ENCODE measurements at regions of chr1 and their contacts with region 1.

Region 1: GRCh38 chr1:37692078-37692833 is at the start of gene CDCA8:
- DNase-seq: peak; percentile 99
- ATAC-seq: peak; percentile 88
- H3K4me3 Mint-ChIP-seq: peak within 1 kb of the TSS; percentile 97
- H3K27ac Mint-ChIP-seq: peak within 1 kb of the TSS; percentile 92
- H3K4me1 Mint-ChIP-seq: peaks cover 32% of the 10 kb centered on the region
- H3K27me3 Mint-ChIP-seq: no peaks in the 10 kb centered on the region
- total RNA-seq, gene CDCA8: 61.2 to 61.7 TPM

Region 2: GRCh38 chr1:36463803-36464604 is 1228.3 kb before region 1 on chr1 and contains the start of gene MRPS15:
- CTCF ChIA-PET with region 1: no interaction called
- POLR2A ChIA-PET with region 1: no interaction called
- intact Hi-C with region 1: loop called in 1 of 2 experiments (anchors 1 kb)
- DNase-seq: peak; percentile 98
- ATAC-seq: peak; percentile 94
- H3K4me3 Mint-ChIP-seq: peak within 1 kb of the TSS; percentile 97
- H3K27ac Mint-ChIP-seq: peak within 1 kb of the TSS; percentile 97
- H3K4me1 Mint-ChIP-seq: peaks cover 31% of the 10 kb centered on the region
- H3K27me3 Mint-ChIP-seq: no peaks in the 10 kb centered on the region
- total RNA-seq, gene MRPS15: 123 to 169 TPM

Region 3: DNA sequence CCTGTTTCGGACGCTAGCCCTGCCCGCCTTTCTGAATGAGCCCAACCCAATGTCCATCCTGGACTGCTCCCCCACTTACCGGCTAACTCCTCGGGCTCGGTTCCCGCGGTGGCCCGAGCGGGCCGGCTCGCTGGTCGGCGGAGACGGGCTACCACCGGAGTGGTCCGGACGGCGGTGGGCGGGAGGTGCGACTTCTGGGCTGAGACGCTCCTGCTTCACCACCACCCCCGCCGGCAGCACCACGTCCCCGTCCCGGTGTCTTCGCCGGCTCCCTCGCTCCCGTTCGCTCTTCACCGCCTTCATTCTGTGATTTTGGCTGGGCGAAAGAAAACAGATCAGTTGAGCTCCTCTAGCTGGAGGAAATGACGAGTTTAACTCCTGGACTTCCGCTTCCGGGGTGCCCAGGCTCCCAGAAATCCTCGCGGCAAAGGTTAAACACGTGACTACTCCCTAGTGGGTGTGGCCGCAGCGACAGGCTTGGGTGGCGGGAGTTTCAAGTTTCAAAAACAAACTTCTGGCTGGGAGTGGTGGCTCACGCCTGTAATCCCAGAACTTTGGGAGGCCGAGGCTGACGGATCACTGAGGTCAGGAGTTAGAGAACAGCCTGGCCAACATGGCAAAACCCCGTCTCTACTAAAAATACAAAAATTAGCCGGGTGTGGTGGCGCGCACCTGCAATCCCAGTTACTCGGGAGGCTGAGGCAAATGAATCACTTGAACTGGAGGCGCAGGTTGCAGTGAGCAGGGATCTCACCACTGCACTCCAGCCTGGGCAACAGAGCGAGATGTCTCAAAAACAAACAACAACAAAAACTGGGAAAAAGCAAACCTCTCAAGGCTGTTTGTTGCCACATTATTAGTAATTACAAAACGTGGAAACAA is 138.1 kb before region 1 on chr1 and contains the start of gene SNIP1:
- CTCF ChIA-PET with region 1: interaction called, 3 read pairs
- POLR2A ChIA-PET with region 1: interaction called, 3 read pairs
- intact Hi-C with region 1: loop called in 1 of 2 experiments (anchors 1 kb)
- DNase-seq: peak; percentile 95
- ATAC-seq: peak; percentile 93
- H3K4me3 Mint-ChIP-seq: peak within 1 kb of the TSS; percentile 92
- H3K27ac Mint-ChIP-seq: peak within 1 kb of the TSS; percentile 95
- H3K4me1 Mint-ChIP-seq: peaks cover 36% of the 10 kb centered on the region
- H3K27me3 Mint-ChIP-seq: no peaks in the 10 kb centered on the region
- total RNA-seq, gene SNIP1: 18.7 to 21.3 TPM

Region 4: DNA sequence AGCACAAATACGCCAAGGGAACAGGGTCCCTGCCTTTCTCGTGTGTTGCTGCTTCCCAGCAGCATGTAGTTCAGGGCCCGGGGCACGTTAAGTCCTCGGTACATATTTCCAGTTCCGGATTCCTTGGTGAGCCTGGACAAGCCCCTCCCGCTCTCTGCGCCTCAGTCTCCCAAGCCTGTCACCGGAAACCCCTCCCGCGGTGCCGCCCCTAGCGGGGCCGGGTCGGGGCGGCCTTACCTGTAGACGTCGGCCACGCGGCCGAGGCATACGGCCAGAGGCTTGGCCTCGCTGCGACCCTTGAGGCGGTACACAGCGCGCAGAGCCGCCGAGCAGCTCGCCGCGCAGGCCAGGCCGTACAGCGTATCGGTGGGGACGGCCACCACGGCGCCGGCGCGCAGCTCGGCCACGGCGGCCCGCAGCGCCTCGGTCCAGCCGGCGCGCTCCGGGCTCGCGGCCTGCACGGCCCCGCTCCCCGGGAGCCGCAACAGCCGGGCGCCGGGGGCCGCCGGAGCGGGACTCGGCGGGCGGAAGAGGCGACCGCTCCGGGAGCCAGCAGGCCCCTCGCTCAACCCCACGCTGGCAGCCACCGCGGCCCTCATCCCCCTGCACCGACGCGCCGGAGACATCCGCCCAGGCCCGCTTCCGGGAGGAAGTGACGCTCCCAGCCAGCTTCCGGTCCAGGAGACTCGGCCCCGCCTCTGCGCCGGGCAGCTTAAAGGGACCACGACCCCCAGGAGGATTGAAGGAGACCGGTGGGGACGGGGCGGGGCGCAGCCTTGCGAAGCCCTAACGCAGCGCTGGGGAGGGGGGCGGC is 115.5 kb after region 1 on chr1 and contains the starts of genes C1orf122 and YRDC:
- CTCF ChIA-PET with region 1: interaction called, 3 read pairs
- POLR2A ChIA-PET with region 1: interaction called, 5 read pairs
- intact Hi-C with region 1: loop called (anchors 1 kb)
- DNase-seq: peak; percentile 95
- ATAC-seq: peak; percentile 92
- H3K4me3 Mint-ChIP-seq: peak within 1 kb of the TSS; percentile 90
- H3K27ac Mint-ChIP-seq: peak within 1 kb of the TSS; percentile 93
- H3K4me1 Mint-ChIP-seq: peaks cover 34% of the 10 kb centered on the region
- H3K27me3 Mint-ChIP-seq: no peaks in the 10 kb centered on the region
- total RNA-seq, gene C1orf122: 10.8 to 17.9 TPM
- total RNA-seq, gene YRDC: 22.9 to 36.3 TPM

Region 5: GRCh38 chr1:37995751-37996345 is 303.6 kb after region 1 on chr1:
- CTCF ChIA-PET with region 1: no interaction called
- POLR2A ChIA-PET with region 1: no interaction called
- intact Hi-C with region 1: loop called in 1 of 2 experiments (anchors 5 kb)
- DNase-seq: peak; percentile 65
- ATAC-seq: peak; percentile 73
- H3K4me3 Mint-ChIP-seq: peak overlapping the region; percentile 69
- H3K27ac Mint-ChIP-seq: peak overlapping the region; percentile 72
- H3K4me1 Mint-ChIP-seq: peaks cover 37% of the 10 kb centered on the region
- H3K27me3 Mint-ChIP-seq: no peaks in the 10 kb centered on the region

Region 6: GRCh38 chr1:38990738-38991639 is 1298.7 kb after region 1 on chr1 and contains the start of gene AKIRIN1:
- CTCF ChIA-PET with region 1: no interaction called
- POLR2A ChIA-PET with region 1: no interaction called
- intact Hi-C with region 1: loop called in 1 of 2 experiments (anchors 5 kb)
- DNase-seq: peak; percentile 98
- ATAC-seq: peak; percentile 91
- H3K4me3 Mint-ChIP-seq: peak within 1 kb of the TSS; percentile 87
- H3K27ac Mint-ChIP-seq: peak within 1 kb of the TSS; percentile 88
- H3K4me1 Mint-ChIP-seq: peaks cover 55% of the 10 kb centered on the region
- H3K27me3 Mint-ChIP-seq: no peaks in the 10 kb centered on the region
- total RNA-seq, gene AKIRIN1: 65.7 to 86.0 TPM